HEK293 (cell line): ENCODE measurements at regions of chr17 and their contacts with region 1.

Region 1: DNA sequence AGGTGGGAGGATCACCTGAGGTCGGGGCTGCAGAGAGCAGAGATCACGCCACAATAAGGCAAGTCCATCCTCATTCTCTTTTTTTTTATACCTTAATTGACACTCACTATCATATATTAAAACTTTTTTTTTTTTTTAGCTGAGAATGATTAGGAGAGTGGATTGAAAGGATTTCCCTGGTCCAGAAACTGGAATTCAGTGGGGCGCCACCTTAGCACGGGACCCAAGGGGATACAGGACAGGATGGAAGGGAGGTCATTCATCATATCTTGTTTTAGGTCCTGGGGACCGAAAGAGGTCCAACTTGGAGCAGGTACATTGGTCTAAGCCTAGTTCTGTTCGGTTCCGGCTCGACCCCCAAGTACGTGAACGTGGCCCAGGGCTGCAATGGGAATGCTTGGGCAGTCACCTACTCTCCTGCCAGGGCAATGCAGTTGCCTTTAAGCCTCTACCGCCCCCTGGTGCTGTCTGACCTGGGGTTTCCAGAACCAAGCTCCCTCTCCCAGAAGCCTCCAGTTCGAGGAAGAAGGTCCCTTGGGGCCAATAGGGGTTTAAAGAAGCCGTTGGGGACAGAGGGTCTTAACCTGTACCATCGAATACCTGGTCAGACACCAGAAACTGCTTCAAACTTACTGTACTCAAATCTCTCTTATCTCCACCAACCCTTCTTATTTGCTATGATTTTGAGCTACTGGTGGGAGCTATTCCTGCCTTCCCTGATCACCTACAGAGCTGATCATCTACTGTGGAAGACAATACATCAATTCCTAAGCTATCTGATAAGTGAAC is 19.9 kb upstream of the GPATCH8 start:
- H3K4me3 ChIP-seq: no peak overlapping the region
- H3K27ac ChIP-seq: no peak overlapping the region
- H3K4me1 ChIP-seq: no peaks in the 10 kb centered on the region
- CTCF ChIP-seq: peak; percentile 78

Region 2: DNA sequence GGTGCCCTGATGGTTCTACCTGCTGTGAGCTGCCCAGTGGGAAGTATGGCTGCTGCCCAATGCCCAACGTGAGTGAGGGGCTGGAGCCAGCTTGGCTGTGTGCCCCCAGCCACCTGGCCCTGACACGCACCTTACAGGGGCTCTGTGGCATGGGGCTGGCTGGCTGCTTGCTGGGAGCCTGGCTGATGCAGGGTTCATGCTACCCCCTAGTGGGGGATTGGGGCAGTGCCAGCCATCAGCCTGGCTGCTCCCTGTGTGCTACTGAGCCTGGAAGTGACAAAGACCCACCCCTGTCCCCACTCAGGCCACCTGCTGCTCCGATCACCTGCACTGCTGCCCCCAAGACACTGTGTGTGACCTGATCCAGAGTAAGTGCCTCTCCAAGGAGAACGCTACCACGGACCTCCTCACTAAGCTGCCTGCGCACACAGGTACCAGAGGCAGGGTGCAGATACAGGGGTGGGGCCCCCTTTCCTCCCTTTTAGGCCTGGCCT is 172.3 kb before region 1 on chr17:
- CTCF ChIA-PET with region 1: interaction called, 10 read pairs
- POLR2A ChIA-PET with region 1: interaction called, 3 read pairs
- H3K4me3 ChIP-seq: no peak overlapping the region
- H3K27ac ChIP-seq: no peak overlapping the region
- H3K4me1 ChIP-seq: no peaks in the 10 kb centered on the region
- CTCF ChIP-seq: peak; percentile 86

Region 3: GRCh38 chr17:44400226-44400847 is 122.7 kb before region 1 on chr17:
- CTCF ChIA-PET with region 1: interaction called, 14 read pairs
- POLR2A ChIA-PET with region 1: no interaction called
- H3K4me3 ChIP-seq: no peak overlapping the region
- H3K27ac ChIP-seq: no peak overlapping the region
- H3K4me1 ChIP-seq: no peaks in the 10 kb centered on the region
- CTCF ChIP-seq: no peak

Region 4: GRCh38 chr17:44409314-44410028 is 113.6 kb before region 1 on chr17:
- CTCF ChIA-PET with region 1: interaction called, 10 read pairs
- POLR2A ChIA-PET with region 1: no interaction called
- H3K4me3 ChIP-seq: no peak overlapping the region
- H3K27ac ChIP-seq: no peak overlapping the region
- H3K4me1 ChIP-seq: no peaks in the 10 kb centered on the region
- CTCF ChIP-seq: no peak

Region 5: GRCh38 chr17:44432254-44433157 is 90.6 kb before region 1 on chr17:
- CTCF ChIA-PET with region 1: no interaction called
- POLR2A ChIA-PET with region 1: no interaction called
- H3K4me3 ChIP-seq: no peak overlapping the region
- H3K27ac ChIP-seq: no peak overlapping the region
- H3K4me1 ChIP-seq: no peaks in the 10 kb centered on the region
- CTCF ChIP-seq: no peak

Region 6: GRCh38 chr17:44503147-44504029 is 19.7 kb before region 1 on chr17 and contains the start of gene GPATCH8:
- CTCF ChIA-PET with region 1: interaction called, 18 read pairs
- POLR2A ChIA-PET with region 1: interaction called, 6 read pairs
- H3K4me3 ChIP-seq: peak within 1 kb of the TSS; percentile 74
- H3K27ac ChIP-seq: peak within 1 kb of the TSS; percentile 92
- H3K4me1 ChIP-seq: peaks cover 17% of the 10 kb centered on the region
- CTCF ChIP-seq: no peak

Region 7: DNA sequence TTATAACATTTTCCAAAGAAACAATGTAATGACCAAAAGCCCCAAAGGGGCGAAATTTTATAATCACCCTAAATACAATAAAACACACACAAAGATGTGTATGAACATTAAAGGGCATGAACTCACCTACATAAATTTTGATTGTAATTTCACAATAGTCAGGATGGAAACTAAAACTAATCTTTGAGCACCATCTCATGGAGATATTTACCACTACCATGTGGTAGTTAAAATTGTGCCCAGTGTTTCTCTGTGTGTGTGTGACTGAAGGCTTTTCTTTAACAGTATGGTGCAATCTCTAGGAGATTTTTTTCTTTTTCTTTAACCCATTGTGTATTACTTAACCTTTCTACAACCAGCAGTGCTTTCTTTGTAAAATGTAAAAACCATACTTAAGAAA is 113.5 kb after region 1 on chr17:
- CTCF ChIA-PET with region 1: interaction called, 11 read pairs
- POLR2A ChIA-PET with region 1: no interaction called
- H3K4me3 ChIP-seq: no peak overlapping the region
- H3K27ac ChIP-seq: no peak overlapping the region
- H3K4me1 ChIP-seq: no peaks in the 10 kb centered on the region
- CTCF ChIP-seq: peak; percentile 63; the same call in 1 of the 2 replicates